OCI-LY7 (cell line): ENCODE measurements at regions of chr3 and their contacts with region 1.

Region 1: GRCh38 chr3:66500576-66501482 is at the start of gene LRIG1:
- DNase-seq: peak; percentile 99
- H3K4me3 ChIP-seq: peak within 1 kb of the TSS; percentile 98
- H3K27ac ChIP-seq: peak within 1 kb of the TSS; percentile 58
- H3K4me1 ChIP-seq: peaks cover 39% of the 10 kb centered on the region
- CTCF ChIP-seq: no peak
- total RNA-seq, gene LRIG1: 74.5 and 115 TPM in 2 replicates

Region 2: DNA sequence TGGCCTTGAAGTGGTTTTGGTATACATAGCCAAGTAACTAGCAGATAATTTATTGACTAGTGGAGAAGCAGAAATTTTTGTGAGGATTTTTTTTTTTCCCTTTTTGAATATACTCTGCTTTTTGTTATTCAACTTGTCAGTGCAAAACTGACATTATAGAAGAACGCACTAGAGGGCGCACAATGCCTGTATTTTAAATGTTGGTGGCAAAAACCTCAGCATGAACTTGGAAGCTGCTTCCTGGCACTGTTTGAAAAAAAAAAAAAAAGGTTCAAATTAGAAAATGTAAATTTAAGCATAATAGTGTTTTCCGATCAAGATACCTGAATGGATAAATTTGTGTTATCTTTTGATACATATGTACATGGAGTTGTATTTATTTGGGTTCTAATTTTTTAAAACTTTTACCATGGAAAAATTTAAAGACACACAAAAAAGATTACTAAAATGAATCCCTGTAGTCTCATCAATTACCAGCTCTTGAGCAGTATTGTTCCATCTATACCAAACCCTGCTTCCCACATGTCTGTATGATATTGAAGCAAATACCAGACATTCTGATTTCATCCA is 224.0 kb before region 1 on chr3:
- CTCF ChIA-PET with region 1: no interaction called
- POLR2A ChIA-PET with region 1: no interaction called
- intact Hi-C with region 1: loop called (anchors 5 kb)
- DNase-seq: peak; percentile 77
- H3K4me3 ChIP-seq: no peak overlapping the region
- H3K27ac ChIP-seq: no peak overlapping the region
- H3K4me1 ChIP-seq: no peaks in the 10 kb centered on the region
- CTCF ChIP-seq: peak; percentile 94

Region 3: GRCh38 chr3:66407611-66408218 is 93.1 kb before region 1 on chr3:
- CTCF ChIA-PET with region 1: interaction called, 3 read pairs
- POLR2A ChIA-PET with region 1: no interaction called
- intact Hi-C with region 1: loop called (anchors 2 kb)
- DNase-seq: peak; percentile 78
- H3K4me3 ChIP-seq: no peak overlapping the region
- H3K27ac ChIP-seq: no peak overlapping the region
- H3K4me1 ChIP-seq: peaks cover 34% of the 10 kb centered on the region
- CTCF ChIP-seq: peak; percentile 91

Region 4: DNA sequence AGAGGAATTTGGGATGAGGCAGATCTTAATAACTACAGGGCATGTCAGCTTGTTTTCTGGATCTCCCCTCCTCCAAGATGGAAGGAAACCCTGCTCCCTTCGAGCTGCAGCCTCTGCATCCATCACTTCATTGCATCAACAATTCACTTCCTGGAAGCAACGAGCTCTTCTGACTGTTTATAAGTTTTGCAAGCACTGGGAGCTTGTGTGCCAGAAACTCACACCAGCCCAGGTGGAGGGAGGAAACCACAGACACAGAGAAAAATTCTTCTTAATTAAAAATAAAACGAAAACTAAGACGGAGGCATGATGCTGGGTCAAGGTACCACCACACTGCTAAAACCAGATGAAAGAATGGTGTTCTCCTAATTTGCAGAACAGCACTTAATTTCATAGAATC is 10.6 kb before region 1 on chr3:
- CTCF ChIA-PET with region 1: no interaction called
- POLR2A ChIA-PET with region 1: interaction called, 32 read pairs
- intact Hi-C with region 1: loop called (anchors 1 kb)
- DNase-seq: peak; percentile 83
- H3K4me3 ChIP-seq: peak overlapping the region; percentile 98
- H3K27ac ChIP-seq: peak overlapping the region; percentile 97
- H3K4me1 ChIP-seq: peaks cover 99% of the 10 kb centered on the region
- CTCF ChIP-seq: no peak

Region 5: GRCh38 chr3:66910266-66911055 is 409.6 kb after region 1 on chr3:
- CTCF ChIA-PET with region 1: no interaction called
- POLR2A ChIA-PET with region 1: no interaction called
- intact Hi-C with region 1: no loop called
- DNase-seq: no peak
- H3K4me3 ChIP-seq: no peak overlapping the region
- H3K27ac ChIP-seq: no peak overlapping the region
- H3K4me1 ChIP-seq: no peaks in the 10 kb centered on the region
- CTCF ChIP-seq: no peak

Region 6: GRCh38 chr3:66998113-66998903 is 497.5 kb after region 1 on chr3 and contains the start of gene KBTBD8:
- CTCF ChIA-PET with region 1: no interaction called
- POLR2A ChIA-PET with region 1: interaction called, 3 read pairs
- intact Hi-C with region 1: loop called (anchors 5 kb)
- DNase-seq: peak; percentile 99
- H3K4me3 ChIP-seq: peak within 1 kb of the TSS; percentile 92
- H3K27ac ChIP-seq: peak within 1 kb of the TSS; percentile 18
- H3K4me1 ChIP-seq: peaks cover 44% of the 10 kb centered on the region
- CTCF ChIP-seq: no peak
- total RNA-seq, gene KBTBD8: 16.4 and 18.4 TPM in 2 replicates

Region 7: GRCh38 chr3:67685499-67685898 is 1184.7 kb after region 1 on chr3:
- CTCF ChIA-PET with region 1: no interaction called
- POLR2A ChIA-PET with region 1: no interaction called
- intact Hi-C with region 1: loop called (anchors 10 kb)
- DNase-seq: peak; percentile 88
- H3K4me3 ChIP-seq: peak overlapping the region; percentile 51
- H3K27ac ChIP-seq: peak overlapping the region; percentile 96
- H3K4me1 ChIP-seq: peaks cover 57% of the 10 kb centered on the region
- CTCF ChIP-seq: no peak